Ascending aorta (tissue), 2 donors: ENCODE measurements at regions of chr17 and their contacts with region 1.

Region 1: GRCh38 chr17:17237026-17237799 is at the start of gene FLCN:
- DNase-seq: peak; percentile 50 to 95
- H3K4me3 ChIP-seq: peak within 1 kb of the TSS; percentile 81 to 96
- H3K27ac ChIP-seq: peak within 1 kb of the TSS; percentile 86 to 95
- H3K4me1 ChIP-seq: peaks cover 3 to 8% of the 10 kb centered on the region in 2 donors
- H3K27me3 ChIP-seq: no peaks in the 10 kb centered on the region
- CTCF ChIP-seq: no peak
- total RNA-seq, gene FLCN: 48.6 TPM

Region 2: DNA sequence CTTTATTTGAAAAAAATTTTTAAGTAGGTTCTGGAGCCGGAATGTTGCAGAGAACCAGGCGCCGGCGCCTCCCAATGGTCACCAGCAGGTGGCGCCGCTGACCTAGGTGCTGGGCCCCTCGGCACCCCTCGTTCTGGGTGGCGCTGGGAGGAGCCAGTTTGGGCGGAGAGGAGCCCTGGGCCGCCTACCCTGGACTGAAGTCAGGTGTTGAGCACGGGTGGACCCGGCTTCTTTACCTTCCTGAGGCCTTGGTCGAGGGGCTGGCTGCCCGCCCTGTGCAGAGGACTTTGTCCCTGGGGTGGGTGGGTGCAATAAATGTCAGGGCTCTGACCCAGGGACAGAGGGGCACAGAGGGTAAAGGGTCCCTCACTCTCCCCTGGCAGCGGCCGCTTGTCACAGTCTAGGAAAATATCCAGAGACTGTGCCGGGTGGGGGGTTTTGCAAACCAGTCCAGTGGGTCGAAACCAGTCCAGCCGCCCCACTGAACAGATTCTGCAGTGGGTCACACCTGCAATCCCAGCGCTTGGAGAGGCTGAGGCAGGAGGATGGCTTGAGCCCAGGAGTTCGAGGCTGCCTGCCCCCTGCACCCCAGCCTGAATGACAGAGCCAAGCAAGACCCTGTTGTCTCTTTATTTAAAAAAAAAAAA is 235.2 kb before region 1 on chr17:
- intact Hi-C with region 1: loop called (anchors 10 kb)
- DNase-seq: peak in 1 of 2 donors; percentile 81
- H3K4me3 ChIP-seq: peak overlapping the region in 1 of 2 donors; percentile 41
- H3K27ac ChIP-seq: no peak overlapping the region
- H3K4me1 ChIP-seq: peaks cover 10 to 18% of the 10 kb centered on the region in 2 donors
- H3K27me3 ChIP-seq: no peaks in the 10 kb centered on the region
- CTCF ChIP-seq: peak; percentile 90 to 99 (median 94)

Region 3: GRCh38 chr17:17041571-17042380 is 195.4 kb before region 1 on chr17:
- intact Hi-C with region 1: loop called (anchors 5 kb)
- DNase-seq: peak; percentile 95 to 99
- H3K4me3 ChIP-seq: peak overlapping the region; percentile 49 to 75
- H3K27ac ChIP-seq: peak overlapping the region; percentile 57 to 58
- H3K4me1 ChIP-seq: peaks cover 3 to 29% of the 10 kb centered on the region in 2 donors
- H3K27me3 ChIP-seq: no peaks in the 10 kb centered on the region
- CTCF ChIP-seq: no peak

Region 4: DNA sequence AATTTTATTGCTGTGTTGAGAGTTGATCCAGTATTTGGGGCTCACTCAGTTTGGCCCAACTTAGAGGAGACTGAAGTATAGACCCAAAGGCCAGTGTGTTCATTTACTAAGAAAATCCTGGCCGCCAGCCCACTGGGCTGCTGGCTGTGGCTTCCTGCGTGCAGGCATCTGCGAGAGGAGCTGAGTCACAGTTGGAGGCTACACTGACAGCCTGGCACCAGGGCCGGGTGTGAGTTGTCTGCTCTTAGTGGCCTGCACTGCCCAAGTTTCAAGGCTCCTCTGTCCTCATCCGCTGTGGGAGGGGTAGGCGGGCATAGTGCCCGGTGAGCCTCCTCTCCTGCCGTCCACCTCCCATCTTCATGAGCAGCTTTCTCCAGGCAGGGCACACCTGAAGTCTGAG is 85.3 kb before region 1 on chr17:
- intact Hi-C with region 1: loop called (anchors 2 kb)
- DNase-seq: peak; percentile 81 to 97
- H3K4me3 ChIP-seq: no peak overlapping the region
- H3K27ac ChIP-seq: peak overlapping the region; percentile 79 to 91
- H3K4me1 ChIP-seq: peaks cover 15% of the 10 kb centered on the region in 2 donors
- H3K27me3 ChIP-seq: no peaks in the 10 kb centered on the region
- CTCF ChIP-seq: no peak

Region 5: DNA sequence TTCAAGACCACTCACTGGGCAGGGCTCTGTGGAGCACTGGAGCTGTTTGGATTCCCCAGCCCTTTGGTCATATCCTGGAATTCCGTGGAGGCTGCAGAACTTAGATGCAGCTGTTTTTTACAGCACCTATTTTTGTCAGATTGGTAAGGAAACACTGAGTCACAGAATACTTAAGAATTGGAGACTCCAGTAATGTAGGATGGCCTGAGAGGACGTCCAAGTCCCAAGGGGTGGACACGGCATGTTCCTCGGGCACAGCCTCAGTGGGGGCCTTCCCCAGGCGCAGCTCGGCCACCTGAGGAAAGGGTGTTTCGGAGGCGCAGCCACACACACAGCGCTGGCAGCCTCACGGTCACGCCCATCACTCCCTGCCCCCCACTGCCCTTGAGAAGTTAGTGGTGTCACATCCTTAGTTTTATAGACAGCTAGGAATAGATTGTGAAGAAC is 45.8 kb before region 1 on chr17:
- intact Hi-C with region 1: loop called (anchors 1 kb)
- DNase-seq: peak in 1 of 2 donors; percentile 84
- H3K4me3 ChIP-seq: no peak overlapping the region
- H3K27ac ChIP-seq: peak overlapping the region; percentile 61 to 70
- H3K4me1 ChIP-seq: peaks cover 7 to 23% of the 10 kb centered on the region in 2 donors
- H3K27me3 ChIP-seq: no peaks in the 10 kb centered on the region
- CTCF ChIP-seq: no peak

Region 6: DNA sequence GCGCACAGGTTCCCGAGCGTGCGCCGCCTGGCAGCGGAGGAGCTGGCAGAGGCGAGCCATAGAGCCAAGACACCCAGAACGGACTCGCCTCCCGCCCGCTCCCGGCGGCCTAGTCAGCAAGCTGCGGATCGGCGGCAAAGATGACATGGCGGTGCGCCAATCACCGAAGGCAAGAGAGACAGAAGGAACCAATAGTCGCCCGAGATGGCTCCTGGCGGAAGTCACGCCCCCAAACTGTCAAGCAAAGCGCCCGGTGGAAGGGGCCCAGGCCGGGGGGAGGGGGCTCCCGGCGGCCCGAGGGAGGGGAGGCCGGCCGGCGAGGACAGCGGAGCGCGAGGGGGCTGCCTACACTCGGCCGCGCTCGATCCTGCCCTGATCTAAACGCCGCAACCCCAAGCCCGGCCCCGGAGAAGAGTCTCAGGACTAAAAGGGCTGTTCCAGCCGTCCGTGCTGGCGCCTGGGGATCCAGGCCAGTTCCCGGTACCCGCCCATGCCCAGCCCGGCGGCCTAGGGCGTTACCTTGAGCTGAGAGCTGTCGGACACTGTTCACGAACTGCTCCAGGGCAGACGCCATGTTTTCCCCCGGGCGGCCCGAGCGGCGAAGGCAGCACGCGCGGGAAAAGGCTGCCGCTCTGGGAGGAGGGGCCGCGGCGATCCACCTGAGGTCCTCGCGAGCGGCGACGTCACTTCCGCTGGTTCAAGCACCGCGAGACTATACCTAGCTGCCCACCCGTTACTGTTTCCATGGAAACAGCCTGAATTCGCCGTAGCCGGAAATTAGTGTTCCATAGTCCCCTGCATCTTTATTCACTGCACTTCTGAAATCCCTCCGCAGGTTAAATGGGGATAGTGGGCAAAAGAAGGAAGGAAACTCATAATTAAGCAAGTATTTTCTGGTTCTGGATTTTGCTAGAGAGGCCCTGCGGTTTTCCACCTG is 43.7 kb after region 1 on chr17 and contains the start of gene COPS3:
- intact Hi-C with region 1: loop called (anchors 1 kb)
- DNase-seq: peak; percentile 88 to 99
- H3K4me3 ChIP-seq: peak within 1 kb of the TSS; percentile 88 to 92
- H3K27ac ChIP-seq: peak within 1 kb of the TSS; percentile 97 to 98
- H3K4me1 ChIP-seq: peaks cover 5 to 14% of the 10 kb centered on the region in 2 donors
- H3K27me3 ChIP-seq: no peaks in the 10 kb centered on the region
- CTCF ChIP-seq: no peak
- total RNA-seq, gene COPS3: 36.6 TPM